Psoas muscle (tissue), 8 donors: ENCODE measurements at regions of chr3 and their contacts with region 1.

Region 1: GRCh38 chr3:113287803-113288648 is 76.7 kb downstream of the BOC start:
- DNase-seq: no peak
- ATAC-seq: peak; percentile 64 to 84 (median 74)
- H3K4me3 ChIP-seq: no peak overlapping the region
- H3K27ac ChIP-seq: no peak overlapping the region
- H3K4me1 ChIP-seq: no peaks in the 10 kb centered on the region
- H3K27me3 ChIP-seq: no peaks in the 10 kb centered on the region
- CTCF ChIP-seq: peak; percentile 99

Region 2: DNA sequence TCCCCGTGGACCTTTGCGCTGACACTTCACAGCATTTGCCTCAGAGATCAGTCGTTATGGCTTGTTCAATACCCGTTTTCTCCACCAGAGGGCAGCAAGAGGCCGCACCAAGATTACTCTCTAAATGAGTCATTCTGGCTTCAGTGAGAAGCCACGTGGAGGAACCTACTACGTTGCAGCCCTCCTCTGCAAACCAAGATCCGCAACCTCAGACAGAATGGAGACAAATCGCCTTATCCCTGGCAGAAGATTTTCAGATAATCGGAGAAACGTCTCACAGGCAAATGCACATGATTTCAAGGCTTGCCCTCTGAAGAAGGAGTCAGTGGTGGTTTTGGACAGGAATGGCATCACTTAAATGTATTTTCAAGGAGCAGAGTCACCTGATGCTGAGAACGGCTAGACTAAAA is 236.7 kb before region 1 on chr3:
- intact Hi-C with region 1: loop called (anchors 1 to 5 kb)
- DNase-seq: peak; percentile 69 to 84
- ATAC-seq: peak; percentile 98 to 100 (median 99)
- H3K4me3 ChIP-seq: peak overlapping the region; percentile 29
- H3K27ac ChIP-seq: no peak overlapping the region
- H3K4me1 ChIP-seq: peaks cover 7% of the 10 kb centered on the region
- H3K27me3 ChIP-seq: no peaks in the 10 kb centered on the region
- CTCF ChIP-seq: peak; percentile 97

Region 3: GRCh38 chr3:113136071-113136470 is 152.0 kb before region 1 on chr3:
- intact Hi-C with region 1: loop called (anchors 1 to 5 kb)
- DNase-seq: no peak
- ATAC-seq: peak in 1 of 4 donors; percentile 57
- H3K4me3 ChIP-seq: no peak overlapping the region
- H3K27ac ChIP-seq: no peak overlapping the region
- H3K4me1 ChIP-seq: no peaks in the 10 kb centered on the region
- H3K27me3 ChIP-seq: no peaks in the 10 kb centered on the region
- CTCF ChIP-seq: peak; percentile 63